B cell (primary cell): ENCODE measurements at regions of chr17 and their contacts with region 1.

Region 1: DNA sequence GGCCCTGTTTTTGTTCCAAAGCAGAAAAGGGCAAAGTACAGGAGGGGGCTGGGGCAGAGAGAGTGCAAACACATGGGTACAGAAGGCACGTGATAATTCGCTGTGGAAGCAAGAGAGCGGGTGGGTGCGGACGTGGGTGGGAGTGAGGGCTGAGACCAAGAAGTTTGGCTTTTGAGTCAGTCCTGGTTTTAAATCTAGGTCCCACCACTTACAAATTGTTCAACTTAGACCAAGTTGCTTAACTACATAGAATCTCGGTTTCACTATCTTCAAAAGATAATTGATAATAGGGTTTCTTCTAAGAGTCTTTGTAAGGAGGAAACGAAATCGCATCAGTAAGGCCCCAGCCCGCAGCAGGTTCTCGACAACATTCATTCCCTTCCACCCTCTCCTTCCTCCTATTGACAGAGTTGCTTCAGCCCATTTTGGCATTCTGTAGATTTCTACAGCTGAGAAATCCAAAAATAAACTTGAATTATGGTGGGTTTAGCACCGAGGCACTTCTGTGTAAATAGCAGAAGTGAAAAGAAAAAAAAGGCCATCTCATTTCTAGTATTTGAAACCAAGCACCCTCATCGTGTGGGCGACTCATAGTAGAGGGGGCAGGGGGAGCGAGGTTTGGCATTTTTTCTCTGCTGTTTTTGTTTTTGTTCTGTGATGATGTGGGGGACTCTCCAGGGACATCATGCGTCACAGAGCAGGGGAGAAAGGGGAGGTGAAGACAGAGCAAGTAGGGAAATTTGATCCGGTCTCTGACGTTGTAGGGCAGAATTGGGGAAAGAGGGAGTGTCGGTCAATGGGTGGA is 33.6 kb upstream of the CCR7 start:
- DNase-seq: peak; percentile 97
- ATAC-seq: peak; percentile 83
- H3K4me3 ChIP-seq: peak overlapping the region in 3 of 5 experiments; percentile 12 to 37 (median 27)
- H3K4me3 Mint-ChIP-seq: peak overlapping the region; percentile 52
- H3K27ac ChIP-seq: peak overlapping the region; percentile 92 to 96
- H3K27ac Mint-ChIP-seq: peak overlapping the region; percentile 87
- H3K4me1 ChIP-seq: peaks cover 72 to 76% of the 10 kb centered on the region in 2 donors
- H3K4me1 Mint-ChIP-seq: peaks cover 85% of the 10 kb centered on the region
- H3K27me3 ChIP-seq: no peaks in the 10 kb centered on the region
- H3K27me3 Mint-ChIP-seq: no peaks in the 10 kb centered on the region
- CTCF ChIP-seq: no peak

Region 2: DNA sequence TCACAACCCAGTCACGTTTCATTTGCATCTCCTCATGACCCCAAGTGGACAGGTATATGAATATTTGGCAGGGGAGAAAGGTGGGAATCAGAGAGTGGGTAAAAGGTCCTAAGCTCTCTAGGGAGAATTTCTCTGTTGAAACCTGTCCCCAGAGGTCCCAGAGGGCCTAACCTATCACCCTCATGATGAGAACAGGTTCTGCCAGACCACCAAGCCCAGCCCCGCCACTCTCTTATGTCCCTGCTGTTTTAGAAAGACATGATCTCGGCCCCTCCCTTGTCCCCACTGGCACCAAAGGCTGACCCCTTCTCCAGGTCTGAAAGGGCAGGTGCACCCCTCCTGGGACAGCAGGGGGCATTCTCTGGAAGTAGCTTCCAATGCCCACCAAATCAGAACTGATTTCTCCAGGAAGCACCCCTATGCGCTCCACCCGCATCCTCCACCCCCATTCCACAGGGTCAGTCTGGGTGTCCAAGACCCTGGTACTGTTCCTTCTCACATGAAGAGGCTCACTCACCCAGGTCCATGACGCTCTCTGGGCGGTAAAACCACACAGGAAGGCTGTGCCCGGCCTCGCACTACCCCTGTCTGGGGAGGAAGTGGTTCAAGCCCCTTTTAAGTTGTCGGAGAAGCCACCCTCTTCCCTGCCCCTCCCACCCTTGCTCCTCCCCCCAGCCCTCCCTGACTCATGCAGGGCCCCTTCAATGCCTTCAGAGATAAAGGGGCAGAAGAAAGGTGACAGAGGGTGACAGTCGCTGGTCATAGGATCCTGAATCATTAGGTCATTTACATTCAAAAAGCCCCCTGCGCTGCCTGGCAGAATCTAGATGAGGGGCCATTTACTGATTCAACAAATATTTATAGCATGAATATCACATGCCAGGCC is 33.7 kb before region 1 on chr17 and contains the start of gene CCR7:
- CTCF ChIA-PET with region 1: interaction called, 53 read pairs
- POLR2A ChIA-PET with region 1: interaction called, 26 read pairs
- intact Hi-C with region 1: loop called (anchors 1 kb)
- DNase-seq: peak; percentile 92
- ATAC-seq: peak; percentile 69
- H3K4me3 ChIP-seq: peak within 1 kb of the TSS; percentile 63 to 94 (median 89)
- H3K4me3 Mint-ChIP-seq: peak within 1 kb of the TSS; percentile 92
- H3K27ac ChIP-seq: peak within 1 kb of the TSS; percentile 92 to 98
- H3K27ac Mint-ChIP-seq: peak within 1 kb of the TSS; percentile 94
- H3K4me1 ChIP-seq: peaks cover 58 to 67% of the 10 kb centered on the region in 2 donors
- H3K4me1 Mint-ChIP-seq: peaks cover 51% of the 10 kb centered on the region
- H3K27me3 ChIP-seq: no peaks in the 10 kb centered on the region
- H3K27me3 Mint-ChIP-seq: no peaks in the 10 kb centered on the region
- CTCF ChIP-seq: no peak
- total RNA-seq, gene CCR7: 451 and 481 TPM in 2 replicates

Region 3: DNA sequence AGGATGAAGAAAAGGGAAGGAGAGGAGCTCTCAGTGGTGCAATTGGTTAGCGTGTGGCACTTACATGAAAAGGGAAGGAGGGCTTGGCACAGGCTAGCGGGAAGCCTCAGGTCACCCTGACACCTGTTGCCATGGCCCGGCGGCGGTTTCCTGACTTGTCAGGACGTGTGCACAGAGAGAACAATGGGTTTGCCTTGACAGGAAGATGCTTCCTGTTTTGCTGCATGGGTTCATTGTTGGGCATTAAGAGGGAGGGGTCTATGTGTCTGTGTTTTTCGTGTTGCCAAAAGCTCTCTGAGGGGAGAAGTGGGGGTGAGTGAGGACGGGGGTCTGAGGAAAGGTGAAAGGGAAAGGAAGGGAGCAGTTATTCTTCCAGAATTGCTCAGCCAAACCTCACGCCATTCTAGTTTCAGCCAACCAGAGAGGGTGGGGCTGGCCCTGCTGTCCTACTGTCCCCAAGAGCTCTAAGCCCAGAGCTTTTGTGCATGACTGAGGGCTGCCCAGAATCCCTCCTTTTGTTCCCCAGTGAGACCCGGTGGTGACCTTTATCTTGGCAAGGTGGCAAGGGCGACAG is 16.4 kb before region 1 on chr17:
- CTCF ChIA-PET with region 1: interaction called, 5 read pairs
- POLR2A ChIA-PET with region 1: interaction called, 11 read pairs
- intact Hi-C with region 1: loop called (anchors 1 kb)
- DNase-seq: peak; percentile 84
- ATAC-seq: peak; percentile 76
- H3K4me3 ChIP-seq: peak overlapping the region in 3 of 5 experiments; percentile 15 to 52 (median 40)
- H3K4me3 Mint-ChIP-seq: peak overlapping the region; percentile 68
- H3K27ac ChIP-seq: peak overlapping the region; percentile 85 to 87
- H3K27ac Mint-ChIP-seq: peak overlapping the region; percentile 77
- H3K4me1 ChIP-seq: peaks cover 66 to 68% of the 10 kb centered on the region in 2 donors
- H3K4me1 Mint-ChIP-seq: peaks cover 83% of the 10 kb centered on the region
- H3K27me3 ChIP-seq: no peaks in the 10 kb centered on the region
- H3K27me3 Mint-ChIP-seq: no peaks in the 10 kb centered on the region
- CTCF ChIP-seq: no peak

Region 4: GRCh38 chr17:40699371-40699770 is 100.5 kb after region 1 on chr17:
- CTCF ChIA-PET with region 1: no interaction called
- POLR2A ChIA-PET with region 1: no interaction called
- intact Hi-C with region 1: no loop called
- DNase-seq: no peak
- ATAC-seq: no peak
- H3K4me3 ChIP-seq: no peak overlapping the region
- H3K4me3 Mint-ChIP-seq: no peak overlapping the region
- H3K27ac ChIP-seq: no peak overlapping the region
- H3K27ac Mint-ChIP-seq: no peak overlapping the region
- H3K4me1 ChIP-seq: no peaks in the 10 kb centered on the region
- H3K4me1 Mint-ChIP-seq: no peaks in the 10 kb centered on the region
- H3K27me3 ChIP-seq: peaks cover 0 to 11% (median 6%) of the 10 kb centered on the region in 4 experiments
- H3K27me3 Mint-ChIP-seq: peaks cover 45% of the 10 kb centered on the region
- CTCF ChIP-seq: no peak